Astrocyte of the cerebellum (primary cell): ENCODE measurements at regions of chr2 and their contacts with region 1.

Region 1: DNA sequence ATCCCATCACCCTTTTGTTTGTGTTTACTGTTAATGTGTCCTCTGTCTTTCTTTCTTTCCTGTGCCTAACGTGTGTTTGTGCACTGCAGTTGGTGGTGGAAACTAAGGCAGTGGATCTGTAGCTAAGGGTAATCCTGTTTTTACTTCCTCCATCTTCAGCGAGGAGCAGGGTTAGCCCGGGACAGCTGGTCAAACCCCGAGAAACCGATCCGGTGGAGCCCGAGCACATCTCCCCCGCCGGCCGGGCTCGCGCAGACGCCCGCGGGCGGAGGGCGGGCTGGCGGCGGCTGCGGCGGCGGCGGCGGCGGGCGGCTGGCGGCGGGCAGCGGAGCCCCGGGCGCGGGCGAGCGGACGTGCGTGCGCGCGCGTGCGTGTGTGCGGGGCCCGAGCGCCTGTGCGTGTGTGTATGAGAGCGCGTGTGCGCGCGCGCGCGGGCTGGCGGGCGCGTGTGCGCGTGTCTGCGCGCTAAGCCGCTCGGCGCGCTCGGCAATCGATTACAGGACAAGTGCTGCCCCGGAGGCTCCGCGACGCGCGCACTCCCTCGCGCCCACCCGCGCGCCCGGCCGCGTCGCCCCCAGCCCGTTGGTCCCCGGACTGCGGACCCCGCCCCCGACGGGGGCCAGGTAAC is at the start of gene IKZF2:
- DNase-seq: peak; percentile 84
- H3K4me3 ChIP-seq: peak within 1 kb of the TSS; percentile 50
- CTCF ChIP-seq: no peak

Region 2: DNA sequence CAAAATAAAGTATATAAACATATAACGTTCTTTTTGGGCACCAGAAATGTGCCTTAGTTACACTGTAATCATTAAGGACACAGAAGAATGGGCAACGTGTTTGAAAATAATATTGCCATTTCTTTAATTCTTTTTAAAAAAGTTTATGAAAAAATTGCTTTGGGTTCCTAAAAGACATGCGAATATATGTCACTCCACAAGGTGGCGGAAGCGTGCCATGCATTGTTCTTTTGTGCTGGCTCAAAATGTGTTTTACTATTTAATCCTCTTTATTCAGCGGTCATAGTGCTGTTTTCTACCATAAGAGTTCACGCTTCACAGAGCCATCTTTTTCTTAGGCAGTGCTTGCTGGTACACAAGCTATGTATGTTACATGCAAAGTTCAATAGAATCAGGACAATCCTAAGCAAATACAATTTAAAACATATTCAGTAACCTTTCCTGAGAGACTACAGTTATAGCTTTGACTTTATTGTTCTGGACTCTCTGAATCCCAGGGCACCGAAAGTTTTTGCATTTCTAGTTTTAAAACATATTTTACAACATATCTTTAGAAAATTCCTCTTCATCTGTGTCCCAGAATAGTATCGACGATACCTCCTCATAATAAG is 465.2 kb before region 1 on chr2:
- in situ Hi-C with region 1: loop called (anchors 25 kb)
- DNase-seq: peak; percentile 67
- H3K4me3 ChIP-seq: no peak overlapping the region
- CTCF ChIP-seq: peak; percentile 79

Region 3: GRCh38 chr2:212770240-212770639 is 381.3 kb before region 1 on chr2:
- in situ Hi-C with region 1: loop called (anchors 5 kb)
- DNase-seq: no peak
- H3K4me3 ChIP-seq: no peak overlapping the region
- CTCF ChIP-seq: no peak